Panc1 (cell line): ENCODE measurements at regions of chr2 and their contacts with region 1.

Region 1: DNA sequence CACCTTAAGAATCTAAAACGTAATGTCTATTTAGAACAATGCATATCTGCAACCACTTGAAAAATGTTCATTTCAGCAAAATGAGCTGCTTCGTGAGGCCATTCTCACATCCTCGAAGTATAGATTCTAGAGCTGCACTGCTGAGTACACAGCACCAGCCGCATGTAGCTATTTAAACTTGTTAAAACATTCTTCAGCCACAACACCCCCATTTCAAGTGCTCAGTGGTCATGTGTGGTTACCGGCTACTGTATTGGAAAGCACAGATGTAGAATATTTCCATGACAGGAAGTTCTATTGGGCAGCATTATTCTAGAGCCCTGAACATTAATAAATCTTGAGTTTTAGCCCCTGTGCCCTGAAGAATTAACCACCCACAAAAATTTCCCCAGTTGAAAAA is 35.0 kb downstream of the SUMO1 start:
- DNase-seq: no peak
- ATAC-seq: no peak
- H3K4me3 ChIP-seq: no peak overlapping the region
- H3K27ac ChIP-seq: no peak overlapping the region
- H3K4me1 ChIP-seq: no peaks in the 10 kb centered on the region
- H3K27me3 ChIP-seq: no peaks in the 10 kb centered on the region
- CTCF ChIP-seq: no peak

Region 2: GRCh38 chr2:202261531-202261930 is 58.2 kb after region 1 on chr2:
- CTCF ChIA-PET with region 1: no interaction called
- POLR2A ChIA-PET with region 1: interaction called, 21 read pairs
- in situ Hi-C with region 1: no loop called
- intact Hi-C with region 1: no loop called
- DNase-seq: no peak
- ATAC-seq: no peak
- H3K4me3 ChIP-seq: no peak overlapping the region
- H3K27ac ChIP-seq: no peak overlapping the region
- H3K4me1 ChIP-seq: 0 out of 2 replicates have a peak, but pooled peaks cover 4% of the 10 kb centered on the region
- H3K27me3 ChIP-seq: no peaks in the 10 kb centered on the region
- CTCF ChIP-seq: no peak